PC-9 (cell line): ENCODE measurements at regions of chr3 and their contacts with region 1.

Region 1: DNA sequence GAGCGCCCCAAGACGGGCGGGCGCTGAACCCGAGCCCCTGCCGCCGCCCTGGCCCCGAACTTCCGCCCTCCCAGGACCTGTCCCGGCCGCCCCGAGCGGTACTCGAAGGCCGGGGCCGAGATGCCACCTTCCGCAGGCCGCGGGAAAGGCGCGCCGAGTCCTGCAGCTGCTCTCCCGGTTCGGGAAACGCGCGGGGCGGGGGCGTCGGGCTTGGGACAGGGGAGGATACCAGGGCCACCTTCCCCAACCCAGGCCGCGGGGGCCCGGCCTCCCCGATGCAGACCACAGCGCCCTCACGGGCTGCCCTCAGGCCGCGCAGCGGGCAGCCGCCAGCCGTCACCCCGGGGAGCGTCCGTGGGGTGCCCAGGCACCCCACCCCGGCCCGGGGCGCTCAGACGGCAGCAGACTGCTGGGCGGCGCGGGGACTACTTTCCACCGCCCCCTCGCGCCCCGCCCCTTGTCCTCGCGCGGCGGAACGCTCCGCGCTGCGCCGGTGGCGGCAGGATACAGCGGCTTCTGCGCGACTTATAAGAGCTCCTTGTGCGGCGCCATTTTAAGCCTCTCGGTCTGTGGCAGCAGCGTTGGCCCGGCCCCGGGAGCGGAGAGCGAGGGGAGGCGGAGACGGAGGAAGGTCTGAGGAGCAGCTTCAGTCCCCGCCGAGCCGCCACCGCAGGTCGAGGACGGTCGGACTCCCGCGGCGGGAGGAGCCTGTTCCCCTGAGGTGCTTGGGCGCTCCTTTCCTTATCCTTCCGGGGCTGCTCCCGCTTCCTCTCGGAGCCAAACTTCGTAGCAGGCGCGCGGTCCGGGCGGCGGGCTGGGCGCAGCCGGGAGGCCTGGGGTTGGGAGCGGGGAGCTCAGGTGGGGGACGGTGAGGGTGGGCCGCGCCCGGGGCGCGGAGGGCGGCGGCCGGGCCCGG is at the start of gene CTNNB1:
- DNase-seq: peak; percentile 77 to 89
- H3K4me3 ChIP-seq: peak within 1 kb of the TSS; percentile 95
- H3K27ac ChIP-seq: peak within 1 kb of the TSS; percentile 89
- H3K4me1 ChIP-seq: peaks cover 31% of the 10 kb centered on the region
- H3K27me3 ChIP-seq: no peaks in the 10 kb centered on the region
- CTCF ChIP-seq: no peak
- total RNA-seq, gene CTNNB1: 251 and 293 TPM in 2 replicates

Region 2: GRCh38 chr3:40363674-40364073 is 835.5 kb before region 1 on chr3:
- CTCF ChIA-PET with region 1: interaction called, 11 read pairs
- POLR2A ChIA-PET with region 1: no interaction called
- intact Hi-C with region 1: no loop called
- DNase-seq: no peak
- H3K4me3 ChIP-seq: no peak overlapping the region
- H3K27ac ChIP-seq: no peak overlapping the region
- H3K4me1 ChIP-seq: no peaks in the 10 kb centered on the region
- H3K27me3 ChIP-seq: no peaks in the 10 kb centered on the region
- CTCF ChIP-seq: no peak

Region 3: DNA sequence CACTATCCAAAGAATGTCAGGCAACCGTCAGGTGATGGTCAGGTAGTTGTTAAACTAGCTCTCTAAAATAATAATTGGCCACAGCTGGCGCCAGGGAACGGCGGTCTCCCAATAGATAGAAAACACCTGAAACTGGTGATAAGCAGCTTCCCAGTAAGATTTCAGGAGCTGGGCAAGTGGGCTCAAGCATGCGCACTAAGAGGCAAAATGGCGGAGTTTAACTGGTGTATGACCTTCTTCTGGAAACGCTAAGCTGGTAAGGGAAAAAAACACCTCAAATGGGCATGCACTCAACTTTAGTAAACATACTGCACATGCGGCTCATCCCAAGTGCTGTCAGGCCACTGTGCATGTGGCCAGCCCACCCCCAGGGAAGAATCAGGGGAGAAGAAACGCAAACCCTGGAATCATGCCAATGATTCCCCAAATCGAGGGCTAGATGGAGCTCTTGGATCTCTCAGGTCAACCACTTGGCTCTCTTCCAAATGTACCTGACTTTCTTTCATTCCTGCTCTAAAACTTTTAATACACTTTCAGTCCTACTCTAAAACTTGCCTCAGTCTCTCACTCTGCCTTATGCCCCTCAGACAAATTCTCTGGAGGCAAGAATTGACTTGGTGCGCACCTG is 479.4 kb before region 1 on chr3:
- CTCF ChIA-PET with region 1: no interaction called
- POLR2A ChIA-PET with region 1: no interaction called
- intact Hi-C with region 1: loop called (anchors 2 kb)
- DNase-seq: peak in 1 of 2 experiments; percentile 17
- H3K4me3 ChIP-seq: no peak overlapping the region
- H3K27ac ChIP-seq: no peak overlapping the region
- H3K4me1 ChIP-seq: no peaks in the 10 kb centered on the region; the same call in 1 of the 2 replicates
- H3K27me3 ChIP-seq: no peaks in the 10 kb centered on the region
- CTCF ChIP-seq: peak; percentile 46; the same call in 1 of the 2 replicates

Region 4: DNA sequence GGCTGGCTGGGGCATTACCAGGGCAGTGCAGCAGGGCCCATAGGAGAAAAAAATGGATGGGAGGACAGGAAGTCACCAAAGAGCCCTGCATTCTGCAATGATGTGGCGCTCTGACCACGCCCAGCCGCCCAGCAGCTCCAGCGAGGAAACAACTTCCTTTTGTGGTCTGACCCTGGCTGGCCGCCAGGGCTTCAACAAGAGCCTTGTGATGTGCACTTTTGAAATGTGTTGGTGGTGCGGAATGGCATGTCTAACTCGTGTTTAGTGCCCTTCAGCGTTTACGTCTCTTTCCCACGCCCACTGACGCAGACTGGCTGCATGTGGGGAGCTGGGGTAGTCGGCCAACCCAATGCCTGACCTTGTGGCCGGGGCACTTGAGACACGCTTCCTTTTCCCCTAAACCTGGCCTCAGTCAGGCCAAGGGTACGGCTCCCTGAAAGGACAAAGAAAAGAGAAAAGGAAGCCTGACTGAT is 81.8 kb before region 1 on chr3:
- CTCF ChIA-PET with region 1: no interaction called
- POLR2A ChIA-PET with region 1: interaction called, 3 read pairs
- intact Hi-C with region 1: loop called (anchors 5 kb)
- DNase-seq: peak; percentile 92 to 98
- H3K4me3 ChIP-seq: no peak overlapping the region; the same call in 1 of the 2 replicates
- H3K27ac ChIP-seq: peak overlapping the region; percentile 79
- H3K4me1 ChIP-seq: peaks cover 15% of the 10 kb centered on the region
- H3K27me3 ChIP-seq: no peaks in the 10 kb centered on the region
- CTCF ChIP-seq: no peak

Region 5: DNA sequence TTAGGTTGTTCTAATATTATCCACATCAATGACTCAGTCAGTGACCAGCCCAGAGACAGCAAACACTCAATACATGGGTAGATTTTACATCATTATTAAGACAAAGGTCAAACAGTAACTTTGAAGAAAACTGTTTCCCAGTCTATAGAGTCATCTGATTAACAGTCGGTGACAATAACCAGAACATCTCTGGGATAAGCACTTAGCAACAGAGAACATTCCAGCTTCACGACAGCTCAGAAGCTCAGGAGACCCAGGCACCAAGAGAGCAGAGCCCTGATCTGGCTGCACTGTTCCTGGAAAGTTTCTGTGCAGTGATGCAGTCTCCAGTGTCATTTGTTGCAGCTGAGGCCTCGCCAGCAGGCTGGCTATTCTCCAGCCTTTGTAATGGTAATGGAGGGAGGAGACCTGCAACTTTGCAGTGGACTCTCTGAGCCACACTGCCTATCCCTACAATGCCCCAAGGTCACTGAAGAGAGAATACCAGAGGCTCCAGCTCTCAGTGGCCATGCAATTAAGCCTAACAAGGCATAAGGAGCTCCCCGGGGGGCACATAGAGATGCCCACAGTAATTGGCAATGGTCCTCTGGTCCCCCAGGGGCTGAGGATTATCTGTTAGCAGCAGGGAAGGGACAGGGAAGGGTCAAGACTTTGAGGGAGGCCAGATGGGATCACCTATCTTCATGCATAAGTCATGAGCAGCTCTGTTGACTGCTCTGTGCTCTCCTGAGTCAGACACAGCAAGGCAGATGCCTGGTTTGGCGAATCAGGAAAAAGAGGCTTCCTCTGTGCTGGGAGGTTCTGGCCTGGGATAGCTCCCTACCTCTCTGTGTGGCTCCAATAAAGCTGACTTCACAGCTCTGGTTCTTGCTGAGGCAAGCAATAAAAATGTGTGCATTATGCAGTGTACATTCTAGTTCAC is 163.7 kb after region 1 on chr3:
- CTCF ChIA-PET with region 1: no interaction called
- POLR2A ChIA-PET with region 1: no interaction called
- intact Hi-C with region 1: no loop called
- DNase-seq: no peak
- H3K4me3 ChIP-seq: no peak overlapping the region
- H3K27ac ChIP-seq: no peak overlapping the region
- H3K4me1 ChIP-seq: 0 out of 2 replicates have a peak, but pooled peaks cover 5% of the 10 kb centered on the region
- H3K27me3 ChIP-seq: no peaks in the 10 kb centered on the region
- CTCF ChIP-seq: no peak

Region 6: GRCh38 chr3:41436983-41437382 is 237.8 kb after region 1 on chr3:
- CTCF ChIA-PET with region 1: interaction called, 17 read pairs
- POLR2A ChIA-PET with region 1: no interaction called
- intact Hi-C with region 1: no loop called
- DNase-seq: no peak
- H3K4me3 ChIP-seq: no peak overlapping the region
- H3K27ac ChIP-seq: no peak overlapping the region
- H3K4me1 ChIP-seq: no peaks in the 10 kb centered on the region
- H3K27me3 ChIP-seq: no peaks in the 10 kb centered on the region
- CTCF ChIP-seq: no peak